ENCODE measurements at regions of chr5 and their contacts with region 1.

Region 1: DNA sequence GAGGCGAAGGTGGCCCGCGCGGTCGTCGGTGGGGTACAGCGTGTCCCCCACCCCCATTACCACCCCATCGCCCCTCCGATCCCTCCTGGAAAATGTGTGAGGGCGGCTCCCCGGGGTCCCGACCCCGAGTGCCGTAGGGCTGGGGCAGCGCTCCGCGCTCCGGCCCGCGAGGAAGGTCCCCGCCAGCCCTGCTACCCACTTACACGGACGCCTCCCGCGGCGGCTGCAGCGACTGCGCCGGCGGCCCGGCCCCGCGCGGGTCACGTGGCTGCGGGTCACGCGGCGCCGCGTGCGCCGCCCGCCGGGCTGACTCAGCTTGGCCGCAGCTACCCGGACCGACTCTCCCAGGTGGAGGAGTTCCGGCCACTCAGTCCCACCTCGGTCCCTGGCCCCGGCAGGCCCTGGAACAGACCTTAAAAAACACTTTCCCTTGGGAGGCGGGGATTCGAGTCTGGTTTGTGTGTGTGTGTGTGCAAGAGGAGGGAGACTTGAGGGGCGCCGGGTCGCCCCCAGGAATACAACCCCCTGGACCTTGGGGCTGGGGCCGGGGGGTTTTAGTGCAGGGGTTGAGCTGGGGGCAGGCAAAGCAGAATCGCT is at the start of gene GNPDA1:
- DNase-seq: peak; percentile 76
- ATAC-seq: peak; percentile 83
- H3K4me3 Mint-ChIP-seq: peak within 1 kb of the TSS; percentile 88
- H3K27ac Mint-ChIP-seq: peak within 1 kb of the TSS; percentile 86
- H3K4me1 Mint-ChIP-seq: peaks cover 44% of the 10 kb centered on the region
- H3K27me3 Mint-ChIP-seq: no peaks in the 10 kb centered on the region
- CTCF ChIP-seq: no peak
- total RNA-seq, gene GNPDA1: 14.2 and 15.0 TPM in 2 replicates

Region 2: DNA sequence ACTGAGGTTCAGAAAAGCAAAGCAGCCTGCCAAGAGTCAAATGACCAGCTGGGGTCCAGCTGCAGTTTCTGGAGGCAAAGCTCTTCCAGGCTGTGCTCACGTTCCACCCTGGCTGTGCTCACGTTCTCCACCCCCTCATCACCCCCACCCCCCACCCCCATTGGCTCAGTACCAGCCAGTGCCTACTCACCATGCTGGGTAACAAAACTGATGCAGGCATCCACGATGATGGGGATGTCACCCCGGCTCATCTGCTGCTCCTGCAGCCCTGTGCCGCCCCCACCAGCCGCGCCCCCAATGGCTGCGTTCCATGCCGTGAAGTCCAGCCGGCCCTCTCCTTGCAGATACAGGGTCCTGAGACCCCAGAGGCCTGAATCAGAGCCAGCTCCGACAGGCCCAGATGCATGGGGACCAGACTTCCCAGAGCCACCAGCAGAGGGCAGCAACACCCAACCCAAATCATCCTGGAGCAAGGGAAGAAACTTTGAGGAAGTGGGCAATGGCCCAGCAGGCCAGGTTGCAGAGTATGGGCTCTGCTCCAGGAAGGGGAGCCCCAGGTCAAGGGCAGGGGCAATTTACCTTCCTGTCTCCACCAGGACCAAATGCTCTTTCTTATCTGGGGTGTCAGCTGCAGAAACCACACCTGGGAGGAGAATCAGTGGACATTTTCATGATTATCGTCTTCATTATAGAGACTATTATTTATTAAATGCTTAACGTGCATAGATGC is 348.0 kb before region 1 on chr5:
- CTCF ChIA-PET with region 1: no interaction called
- POLR2A ChIA-PET with region 1: no interaction called
- intact Hi-C with region 1: loop called (anchors 1 kb)
- DNase-seq: peak; percentile 75
- ATAC-seq: peak; percentile 96
- H3K4me3 Mint-ChIP-seq: no peak overlapping the region
- H3K27ac Mint-ChIP-seq: no peak overlapping the region
- H3K4me1 Mint-ChIP-seq: peaks cover 4% of the 10 kb centered on the region
- H3K27me3 Mint-ChIP-seq: peaks cover 4% of the 10 kb centered on the region
- CTCF ChIP-seq: peak; percentile 93

Region 3: GRCh38 chr5:141923448-141924352 is 89.2 kb before region 1 on chr5 and contains the start of gene DELE1:
- CTCF ChIA-PET with region 1: no interaction called
- POLR2A ChIA-PET with region 1: interaction called, 6 read pairs
- intact Hi-C with region 1: loop called (anchors 2 kb)
- DNase-seq: peak; percentile 84
- ATAC-seq: peak; percentile 96
- H3K4me3 Mint-ChIP-seq: peak within 1 kb of the TSS; percentile 91
- H3K27ac Mint-ChIP-seq: peak within 1 kb of the TSS; percentile 95
- H3K4me1 Mint-ChIP-seq: peaks cover 23% of the 10 kb centered on the region
- H3K27me3 Mint-ChIP-seq: no peaks in the 10 kb centered on the region
- CTCF ChIP-seq: no peak
- total RNA-seq, gene DELE1: 95.0 and 114 TPM in 2 replicates

Region 4: GRCh38 chr5:142024771-142025304 is 11.9 kb after region 1 on chr5:
- CTCF ChIA-PET with region 1: interaction called, 7 read pairs
- POLR2A ChIA-PET with region 1: interaction called, 3 read pairs
- intact Hi-C with region 1: loop called (anchors 1 kb)
- DNase-seq: peak; percentile 65
- ATAC-seq: peak; percentile 100
- H3K4me3 Mint-ChIP-seq: peak overlapping the region; percentile 92
- H3K27ac Mint-ChIP-seq: peak overlapping the region; percentile 97
- H3K4me1 Mint-ChIP-seq: peaks cover 13% of the 10 kb centered on the region
- H3K27me3 Mint-ChIP-seq: peaks cover 25% of the 10 kb centered on the region
- CTCF ChIP-seq: no peak

Region 5: GRCh38 chr5:142145106-142145900 is 132.4 kb after region 1 on chr5:
- CTCF ChIA-PET with region 1: interaction called, 47 read pairs
- POLR2A ChIA-PET with region 1: interaction called, 3 read pairs
- intact Hi-C with region 1: loop called (anchors 1 kb)
- DNase-seq: no peak
- ATAC-seq: peak; percentile 86
- H3K4me3 Mint-ChIP-seq: no peak overlapping the region
- H3K27ac Mint-ChIP-seq: no peak overlapping the region
- H3K4me1 Mint-ChIP-seq: no peaks in the 10 kb centered on the region
- H3K27me3 Mint-ChIP-seq: no peaks in the 10 kb centered on the region
- CTCF ChIP-seq: peak; percentile 78

Region 6: DNA sequence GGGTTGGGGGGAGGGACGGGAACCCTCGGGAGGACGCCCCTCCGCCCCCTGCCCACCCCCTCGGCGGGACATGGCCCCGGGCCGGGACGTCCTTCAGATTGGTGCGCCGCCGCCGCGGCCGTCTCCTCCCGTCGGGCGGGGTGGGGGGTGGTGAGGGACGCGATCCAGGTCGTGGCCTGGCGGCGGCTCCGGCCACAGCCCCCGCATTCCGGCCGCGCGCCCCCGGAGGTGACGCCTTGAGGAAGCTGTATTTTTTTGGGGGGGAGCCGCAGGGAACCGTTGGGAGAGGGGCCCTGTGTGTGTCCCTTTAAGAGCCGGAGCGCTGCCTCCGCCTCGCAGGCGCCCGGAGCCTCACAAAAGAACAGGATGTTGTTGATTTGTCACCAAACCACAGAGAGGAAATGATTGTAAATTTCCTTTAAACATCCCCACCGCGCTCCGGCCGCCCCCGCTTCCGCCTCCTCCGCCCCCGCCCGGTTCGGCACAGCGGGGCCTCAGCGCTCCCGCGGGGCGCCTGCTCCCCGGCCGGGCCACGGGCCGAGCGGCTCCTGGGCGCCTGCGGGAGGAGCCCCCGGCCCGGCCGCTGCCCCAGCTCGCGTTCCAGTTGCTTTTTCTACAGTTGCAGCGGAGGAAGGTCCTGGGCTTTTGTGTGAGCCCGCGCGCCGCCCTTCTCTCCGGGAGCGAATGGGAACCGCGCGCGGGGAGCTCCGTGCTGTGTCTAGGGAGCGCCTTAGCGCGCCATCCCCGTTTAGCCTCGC is 344.0 kb after region 1 on chr5:
- CTCF ChIA-PET with region 1: no interaction called
- POLR2A ChIA-PET with region 1: no interaction called
- intact Hi-C with region 1: loop called (anchors 5 kb)
- DNase-seq: peak; percentile 80
- ATAC-seq: peak; percentile 84
- H3K4me3 Mint-ChIP-seq: peak overlapping the region; percentile 83
- H3K27ac Mint-ChIP-seq: peak overlapping the region; percentile 79
- H3K4me1 Mint-ChIP-seq: peaks cover 40% of the 10 kb centered on the region
- H3K27me3 Mint-ChIP-seq: peaks cover 5% of the 10 kb centered on the region
- CTCF ChIP-seq: no peak